Activated T-helper 1 cell treated with anti-CD3 and anti-CD28 coated beads, Interleukin-12 subunit alpha, Interleukin-12 subunit beta, Interleukin-2, Interleukin-4 antibody, amounts not matched to agents 30 ng/mL and 10 ng/mL and 1 ng/mL, durations not matched to agents 14 hours and 24 hours and 36 hours (primary cell): ENCODE measurements at regions of chr3 and their contacts with region 1.

Region 1: DNA sequence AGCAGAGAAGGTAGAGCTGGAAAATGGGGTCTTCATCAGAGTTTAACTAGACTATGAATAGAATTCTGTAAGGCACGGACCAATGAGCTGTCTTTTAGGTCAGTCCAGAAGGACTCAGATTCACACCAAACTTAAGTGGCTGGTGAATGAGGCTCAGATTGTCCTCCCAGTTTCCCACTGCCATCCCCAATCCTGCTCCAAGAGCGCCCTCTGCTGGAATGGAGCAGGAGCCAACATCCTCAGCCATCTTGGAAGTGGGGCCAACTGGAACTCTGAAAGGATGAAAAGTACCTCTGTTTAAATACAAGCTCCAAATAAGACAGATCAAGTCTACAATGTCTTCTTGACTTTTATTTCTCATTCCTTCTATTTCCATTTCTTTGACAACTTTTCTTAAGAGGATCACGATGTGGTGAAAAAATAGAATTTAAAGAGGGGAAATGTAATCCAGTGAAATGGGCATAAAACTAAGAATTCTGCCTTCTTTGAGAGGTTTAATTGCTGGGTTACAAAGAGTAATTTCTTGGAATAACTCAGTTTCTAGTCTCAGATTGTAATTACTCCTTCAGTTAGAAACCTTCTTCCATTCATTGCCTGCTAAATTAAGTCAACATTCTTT is 217.1 kb upstream of the TPRG1 start:
- DNase-seq: peak; percentile 68
- H3K4me3 Mint-ChIP-seq: no peak overlapping the region
- H3K27ac Mint-ChIP-seq: no peak overlapping the region
- H3K4me1 Mint-ChIP-seq: peaks cover 46% of the 10 kb centered on the region
- H3K27me3 Mint-ChIP-seq: no peaks in the 10 kb centered on the region

Region 2: GRCh38 chr3:187836823-187837770 is 1117.6 kb before region 1 on chr3:
- intact Hi-C with region 1: no loop called
- DNase-seq: no peak
- H3K4me3 Mint-ChIP-seq: no peak overlapping the region
- H3K27ac Mint-ChIP-seq: no peak overlapping the region
- H3K4me1 Mint-ChIP-seq: peaks cover 26% of the 10 kb centered on the region
- H3K27me3 Mint-ChIP-seq: no peaks in the 10 kb centered on the region

Region 3: DNA sequence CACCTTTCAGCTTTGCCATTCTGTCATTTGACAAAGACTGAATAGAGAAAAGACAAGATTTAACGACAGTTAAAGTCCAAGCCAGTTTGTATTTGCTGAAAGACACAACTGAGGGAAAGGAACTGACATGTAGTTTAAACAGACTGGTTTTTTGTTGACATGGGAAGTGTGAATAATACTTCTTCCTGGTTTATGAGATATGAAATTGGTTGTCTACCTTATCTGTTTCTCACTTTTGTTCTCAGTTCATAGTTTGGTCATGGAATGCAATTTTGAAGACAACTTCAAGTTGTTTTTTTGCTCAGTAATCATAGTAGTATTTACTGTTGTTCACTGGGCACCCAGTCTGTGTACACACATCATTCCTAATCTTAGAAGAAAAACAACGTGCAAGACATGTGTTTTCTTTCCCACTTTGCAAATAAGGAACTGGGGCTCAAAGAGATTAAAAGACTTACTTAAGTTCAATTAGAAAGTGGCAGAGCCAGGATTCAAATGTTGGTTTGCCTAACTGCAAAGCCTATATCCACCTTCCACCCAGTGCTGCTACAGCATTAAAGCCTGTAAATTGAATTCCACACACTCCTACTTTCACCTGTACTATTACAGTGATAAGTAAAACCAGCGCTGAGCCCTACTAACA is 697.2 kb before region 1 on chr3:
- intact Hi-C with region 1: loop called (anchors 10 kb)
- DNase-seq: no peak
- H3K4me3 Mint-ChIP-seq: no peak overlapping the region
- H3K27ac Mint-ChIP-seq: peak overlapping the region; percentile 63
- H3K4me1 Mint-ChIP-seq: peaks cover 62% of the 10 kb centered on the region
- H3K27me3 Mint-ChIP-seq: peaks cover 2% of the 10 kb centered on the region

Region 4: DNA sequence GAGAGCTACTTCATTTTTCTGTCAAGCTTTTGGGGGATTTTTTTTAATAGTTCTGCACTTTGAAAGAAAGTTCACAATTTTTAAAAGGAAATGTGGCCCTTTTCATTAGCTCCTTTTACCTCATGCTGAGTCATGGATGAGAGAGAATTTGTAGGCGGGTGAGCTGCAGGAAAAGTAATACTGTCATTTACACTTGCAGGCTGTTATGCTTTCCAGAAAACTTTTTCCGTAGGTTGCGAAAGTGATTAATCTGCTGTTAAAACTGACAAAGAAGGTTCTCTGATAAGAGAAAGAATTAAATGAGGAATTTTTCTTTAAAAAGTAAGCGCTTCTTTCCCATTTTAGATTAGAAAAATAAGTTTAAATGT is 370.6 kb before region 1 on chr3:
- intact Hi-C with region 1: loop called (anchors 2 kb)
- DNase-seq: no peak
- H3K4me3 Mint-ChIP-seq: no peak overlapping the region
- H3K27ac Mint-ChIP-seq: no peak overlapping the region
- H3K4me1 Mint-ChIP-seq: no peaks in the 10 kb centered on the region
- H3K27me3 Mint-ChIP-seq: no peaks in the 10 kb centered on the region

Region 5: GRCh38 chr3:188646592-188646991 is 308.1 kb before region 1 on chr3:
- intact Hi-C with region 1: no loop called
- DNase-seq: no peak
- H3K4me3 Mint-ChIP-seq: no peak overlapping the region
- H3K27ac Mint-ChIP-seq: no peak overlapping the region
- H3K4me1 Mint-ChIP-seq: peaks cover 9% of the 10 kb centered on the region
- H3K27me3 Mint-ChIP-seq: no peaks in the 10 kb centered on the region

Region 6: DNA sequence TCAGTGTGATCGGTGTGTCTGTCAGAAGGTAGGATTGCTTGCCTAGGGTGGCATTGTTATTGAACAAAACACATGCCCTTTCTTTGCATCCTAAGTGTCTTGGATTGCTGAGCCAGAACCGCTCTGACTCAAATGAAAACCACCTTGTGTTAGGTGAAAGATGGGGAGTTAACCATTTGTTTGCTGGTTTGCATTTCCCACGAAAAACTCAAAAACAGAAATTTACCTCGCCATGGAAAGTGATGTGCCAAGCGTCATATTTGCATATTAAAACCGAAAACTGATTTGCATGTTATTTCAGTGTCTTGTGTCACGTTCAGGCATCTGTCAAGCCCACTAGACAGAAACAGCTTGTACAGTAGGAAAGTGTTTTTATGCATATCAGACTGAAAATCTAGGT is 257.6 kb before region 1 on chr3:
- intact Hi-C with region 1: loop called (anchors 5 kb)
- DNase-seq: no peak
- H3K4me3 Mint-ChIP-seq: no peak overlapping the region
- H3K27ac Mint-ChIP-seq: peak overlapping the region; percentile 18
- H3K4me1 Mint-ChIP-seq: peaks cover 36% of the 10 kb centered on the region
- H3K27me3 Mint-ChIP-seq: peaks cover 5% of the 10 kb centered on the region

Region 7: GRCh38 chr3:189041482-189042090 is 86.9 kb after region 1 on chr3:
- intact Hi-C with region 1: loop called (anchors 1 kb)
- DNase-seq: peak; percentile 75
- H3K4me3 Mint-ChIP-seq: no peak overlapping the region
- H3K27ac Mint-ChIP-seq: no peak overlapping the region
- H3K4me1 Mint-ChIP-seq: peaks cover 56% of the 10 kb centered on the region
- H3K27me3 Mint-ChIP-seq: peaks cover 4% of the 10 kb centered on the region

Region 8: GRCh38 chr3:189132231-189132707 is 177.6 kb after region 1 on chr3:
- intact Hi-C with region 1: no loop called
- DNase-seq: peak; percentile 75
- H3K4me3 Mint-ChIP-seq: peak overlapping the region; percentile 69
- H3K27ac Mint-ChIP-seq: peak overlapping the region; percentile 76
- H3K4me1 Mint-ChIP-seq: peaks cover 28% of the 10 kb centered on the region
- H3K27me3 Mint-ChIP-seq: no peaks in the 10 kb centered on the region